ENCODE measurements at regions of chr2 and their contacts with region 1.

Region 1: GRCh38 chr2:68742626-68743415 is 8.2 kb downstream of the ARHGAP25 start:
- DNase-seq: peak in 3 of 9 experiments; percentile 3 to 35 (median 11)
- ATAC-seq: no peak
- H3K4me3 ChIP-seq: no peak overlapping the region
- H3K4me3 Mint-ChIP-seq: peak overlapping the region; percentile 17
- H3K27ac ChIP-seq: peak overlapping the region in 1 of 2 experiments; percentile 18
- H3K27ac Mint-ChIP-seq: peak overlapping the region; percentile 42
- H3K4me1 ChIP-seq: peaks cover 82% of the 10 kb centered on the region
- H3K4me1 Mint-ChIP-seq: peaks cover 90% of the 10 kb centered on the region
- H3K27me3 ChIP-seq: no peaks in the 10 kb centered on the region
- H3K27me3 Mint-ChIP-seq: no peaks in the 10 kb centered on the region
- CTCF ChIP-seq: no peak

Region 2: DNA sequence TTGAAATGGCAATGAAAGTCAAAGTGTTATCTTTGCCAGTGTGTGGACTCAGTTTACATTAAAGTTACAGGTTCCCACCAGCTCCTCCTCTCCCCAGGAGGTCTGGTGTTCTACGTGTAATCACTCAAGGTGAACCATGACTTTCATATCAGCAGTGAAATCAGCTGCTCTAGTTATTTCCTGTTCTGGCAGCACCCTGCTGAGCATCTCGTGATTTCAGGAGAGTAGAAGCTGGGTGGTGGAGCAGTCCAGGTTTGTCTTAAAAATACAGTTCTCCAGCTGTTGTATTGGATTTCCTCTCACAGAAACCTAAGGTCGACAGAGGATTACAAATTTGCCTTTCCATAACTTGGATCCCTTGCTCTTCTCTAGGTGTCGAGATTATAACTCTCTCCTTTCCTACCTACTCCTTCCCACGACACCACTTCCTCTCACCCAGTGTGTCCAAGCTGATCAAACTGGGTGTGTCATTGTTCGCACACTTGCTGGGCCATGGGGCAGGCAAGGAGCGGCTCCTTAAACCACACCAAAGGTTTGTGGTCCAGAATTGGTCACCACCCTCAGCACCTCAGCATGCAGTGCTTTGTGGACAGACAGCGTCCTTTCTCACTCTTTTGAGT is 21.2 kb before region 1 on chr2:
- CTCF ChIA-PET with region 1: interaction called, 18 read pairs
- POLR2A ChIA-PET with region 1: interaction called, 6 read pairs
- intact Hi-C with region 1: loop called in 1 of 2 experiments (anchors 1 kb)
- DNase-seq: peak in 7 of 9 experiments; percentile 16 to 76 (median 46)
- ATAC-seq: peak; percentile 73
- H3K4me3 ChIP-seq: peak overlapping the region in 1 of 2 experiments; percentile 4
- H3K4me3 Mint-ChIP-seq: peak overlapping the region; percentile 72
- H3K27ac ChIP-seq: peak overlapping the region in 1 of 2 experiments; percentile 63
- H3K27ac Mint-ChIP-seq: peak overlapping the region; percentile 87
- H3K4me1 ChIP-seq: peaks cover 71% of the 10 kb centered on the region
- H3K4me1 Mint-ChIP-seq: peaks cover 82% of the 10 kb centered on the region
- H3K27me3 ChIP-seq: no peaks in the 10 kb centered on the region
- H3K27me3 Mint-ChIP-seq: no peaks in the 10 kb centered on the region
- CTCF ChIP-seq: no peak

Region 3: GRCh38 chr2:69893684-69894551 is 1151.1 kb after region 1 on chr2 and contains the start of gene SNRNP27:
- CTCF ChIA-PET with region 1: no interaction called
- POLR2A ChIA-PET with region 1: no interaction called
- intact Hi-C with region 1: no loop called
- DNase-seq: peak; percentile 71 to 89 (median 83)
- ATAC-seq: peak; percentile 92
- H3K4me3 ChIP-seq: peak within 1 kb of the TSS; percentile 85 to 88
- H3K4me3 Mint-ChIP-seq: peak within 1 kb of the TSS; percentile 99
- H3K27ac ChIP-seq: peak within 1 kb of the TSS; percentile 82 to 86
- H3K27ac Mint-ChIP-seq: peak within 1 kb of the TSS; percentile 99
- H3K4me1 ChIP-seq: peaks cover 13% of the 10 kb centered on the region
- H3K4me1 Mint-ChIP-seq: peaks cover 46% of the 10 kb centered on the region
- H3K27me3 ChIP-seq: no peaks in the 10 kb centered on the region
- H3K27me3 Mint-ChIP-seq: no peaks in the 10 kb centered on the region
- CTCF ChIP-seq: no peak
- total RNA-seq, gene SNRNP27: 47.9 to 58.5 TPM

Region 4: DNA sequence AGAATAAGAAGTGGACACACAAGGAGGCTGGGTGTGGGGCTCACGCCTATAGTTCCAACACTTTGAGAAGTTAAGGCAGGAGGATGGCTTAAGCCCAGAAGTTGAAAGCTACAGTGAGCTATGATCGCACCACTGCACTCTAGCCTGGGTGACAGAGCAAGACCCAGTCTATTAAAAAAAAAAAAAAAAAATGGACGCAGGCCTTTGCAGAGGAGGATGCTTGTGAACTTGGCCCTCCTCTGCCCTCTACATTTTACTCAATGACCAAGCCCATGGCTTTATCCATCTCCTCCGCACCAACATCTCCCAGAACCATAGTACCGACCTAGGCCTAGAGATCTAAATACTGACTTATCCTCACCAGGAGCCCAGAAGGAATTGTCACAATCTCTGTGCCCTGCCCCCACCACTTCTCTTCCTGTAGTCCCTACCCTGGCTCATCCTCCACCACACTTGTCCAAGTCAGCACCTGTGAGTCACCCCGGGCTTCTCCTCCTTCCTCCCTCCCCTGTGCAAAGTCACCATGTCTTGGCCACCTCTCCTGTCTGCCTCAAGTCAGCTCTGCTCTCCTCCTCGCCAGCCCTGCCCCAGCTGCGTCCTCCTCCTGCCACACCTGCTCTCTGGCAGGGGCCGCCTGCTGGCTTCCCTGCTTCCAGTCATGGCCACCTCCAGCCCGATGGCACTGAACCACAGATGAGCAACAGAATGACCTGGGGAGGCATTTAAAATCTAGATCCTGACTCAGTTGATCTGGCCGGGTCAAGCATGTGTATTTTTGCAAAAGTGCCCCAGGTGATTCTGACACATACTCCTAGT is 1254.4 kb after region 1 on chr2:
- CTCF ChIA-PET with region 1: no interaction called
- POLR2A ChIA-PET with region 1: no interaction called
- intact Hi-C with region 1: no loop called
- DNase-seq: peak in 1 of 9 experiments; percentile 27
- ATAC-seq: no peak
- H3K4me3 ChIP-seq: no peak overlapping the region
- H3K4me3 Mint-ChIP-seq: no peak overlapping the region
- H3K27ac ChIP-seq: no peak overlapping the region
- H3K27ac Mint-ChIP-seq: no peak overlapping the region
- H3K4me1 ChIP-seq: peaks cover 2% of the 10 kb centered on the region
- H3K4me1 Mint-ChIP-seq: peaks cover 4% of the 10 kb centered on the region
- H3K27me3 ChIP-seq: no peaks in the 10 kb centered on the region
- H3K27me3 Mint-ChIP-seq: no peaks in the 10 kb centered on the region
- CTCF ChIP-seq: no peak

Region 5: DNA sequence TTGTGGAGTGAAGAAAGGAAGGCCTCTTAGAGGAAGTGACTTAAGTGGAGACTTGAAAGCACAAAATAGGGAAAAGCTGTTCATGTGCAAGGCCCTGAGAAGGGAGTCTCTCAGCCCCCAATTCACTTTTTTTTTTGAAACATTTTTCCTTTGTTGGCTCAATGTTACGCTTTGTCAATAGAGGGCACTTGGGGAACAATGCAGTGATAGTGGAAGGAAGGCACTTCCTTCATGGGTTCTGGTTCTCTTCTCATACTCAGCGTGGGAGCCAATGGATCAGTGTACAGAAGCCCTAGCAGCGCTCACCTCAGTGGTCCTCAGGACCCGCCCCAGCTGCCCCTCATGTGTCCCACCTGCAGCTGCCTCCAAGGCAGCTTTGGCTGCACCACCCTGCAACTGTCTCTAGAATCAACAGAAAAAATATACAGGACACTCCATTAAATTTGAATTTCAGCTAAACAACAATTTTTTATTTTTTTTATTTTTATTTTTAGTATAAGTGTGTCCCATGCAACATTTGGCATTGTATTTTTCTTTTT is 1456.6 kb after region 1 on chr2:
- CTCF ChIA-PET with region 1: no interaction called
- POLR2A ChIA-PET with region 1: no interaction called
- intact Hi-C with region 1: no loop called
- DNase-seq: no peak
- ATAC-seq: no peak
- H3K4me3 ChIP-seq: no peak overlapping the region
- H3K4me3 Mint-ChIP-seq: no peak overlapping the region
- H3K27ac ChIP-seq: no peak overlapping the region
- H3K27ac Mint-ChIP-seq: no peak overlapping the region
- H3K4me1 ChIP-seq: no peaks in the 10 kb centered on the region
- H3K4me1 Mint-ChIP-seq: no peaks in the 10 kb centered on the region
- H3K27me3 ChIP-seq: no peaks in the 10 kb centered on the region
- H3K27me3 Mint-ChIP-seq: peaks cover 2% of the 10 kb centered on the region
- CTCF ChIP-seq: no peak